Right cardiac atrium (tissue), 5 donors: ENCODE measurements at regions of chr7 and their contacts with region 1.

Region 1: DNA sequence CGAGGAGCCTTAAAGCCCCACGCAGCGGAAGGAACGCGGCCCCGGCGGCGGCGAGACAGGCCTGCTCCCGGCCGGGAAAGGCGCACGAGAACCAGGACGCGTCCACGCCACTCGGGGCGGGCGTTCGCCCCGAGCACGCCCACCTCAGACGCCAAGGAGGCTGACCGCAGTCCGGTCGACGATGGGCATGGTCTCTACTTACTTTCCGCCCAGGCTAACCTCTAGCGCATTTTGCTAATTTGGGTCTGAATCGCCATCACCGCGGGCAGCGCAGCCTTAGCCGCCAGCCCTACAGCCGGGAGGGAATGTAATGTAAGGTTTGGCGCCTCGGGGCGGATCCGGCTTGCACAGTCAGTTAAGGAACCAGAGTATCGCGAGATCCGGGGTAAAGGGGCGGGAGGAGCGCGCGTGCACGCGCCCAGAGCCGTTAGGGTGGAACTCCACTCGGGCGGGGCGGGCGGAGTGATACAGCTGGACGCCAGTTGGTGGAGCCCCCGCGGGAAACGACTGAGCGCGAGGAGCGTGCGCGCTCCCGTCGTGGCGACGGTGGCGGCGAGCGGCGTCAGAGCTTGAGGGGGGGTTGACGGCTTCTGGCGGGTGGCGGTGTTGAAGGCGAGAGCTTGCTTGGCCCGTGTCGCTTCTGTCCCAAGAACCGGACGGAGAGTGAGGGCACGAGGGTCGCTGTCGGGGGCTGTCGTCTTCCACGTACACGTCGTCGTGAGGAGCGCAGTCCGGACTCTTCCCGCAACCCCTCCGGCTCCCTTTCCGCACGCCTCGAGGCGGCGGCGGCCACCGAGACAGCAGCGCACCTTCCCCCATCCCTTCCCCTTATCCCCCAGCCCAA is at the start of gene LUC7L2:
- DNase-seq: peak; percentile 99 to 100 (median 100)
- ATAC-seq: peak; percentile 97 to 98
- H3K4me3 ChIP-seq: peak within 1 kb of the TSS; percentile 80
- H3K27ac ChIP-seq: peak within 1 kb of the TSS; percentile 95
- H3K4me1 ChIP-seq: peaks cover 7% of the 10 kb centered on the region
- H3K27me3 ChIP-seq: no peaks in the 10 kb centered on the region
- total RNA-seq, gene LUC7L2: 49.3 to 58.3 (median 54.7) TPM

Region 2: DNA sequence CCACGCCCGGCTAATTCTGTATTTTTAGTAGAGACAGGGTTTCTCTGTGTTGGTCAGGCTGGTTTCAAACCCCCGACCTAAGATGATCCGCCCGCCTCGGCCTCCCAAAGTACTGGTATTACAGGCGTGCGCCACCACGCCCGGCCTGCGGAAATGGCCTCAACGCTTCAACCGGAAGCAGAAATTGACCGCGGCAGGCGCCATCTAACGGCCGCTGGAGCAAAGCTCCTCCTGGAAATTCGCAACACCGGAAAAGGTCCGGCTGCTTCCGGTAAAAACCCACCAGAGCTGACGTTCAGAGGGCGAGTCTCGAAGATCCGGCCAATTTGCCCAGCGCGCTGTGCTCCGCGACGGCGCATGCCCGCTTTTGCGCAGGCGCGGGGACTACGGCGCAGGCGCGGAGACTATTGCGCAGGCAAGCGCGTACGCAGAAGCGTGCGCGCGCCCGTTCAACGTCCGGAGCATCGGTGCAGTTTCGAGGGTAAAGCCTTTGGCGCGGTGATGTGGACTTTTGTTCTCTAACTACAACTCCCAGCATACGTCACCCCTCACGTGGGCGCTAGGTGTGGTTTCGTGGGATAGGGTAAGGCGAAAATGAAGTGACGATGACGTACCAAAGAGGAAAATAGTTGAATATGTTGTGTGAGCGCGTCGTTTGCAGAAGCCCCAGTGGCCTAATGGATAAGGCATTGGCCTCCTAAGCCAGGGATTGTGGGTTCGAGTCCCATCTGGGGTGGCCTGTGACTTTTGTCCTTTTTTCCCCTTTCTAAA is 19.4 kb before region 1 on chr7:
- intact Hi-C with region 1: loop called in 1 of 4 experiments (anchors 1 kb)
- DNase-seq: peak; percentile 98 to 99 (median 99)
- ATAC-seq: peak; percentile 91 to 96
- H3K4me3 ChIP-seq: peak overlapping the region; percentile 75
- H3K27ac ChIP-seq: peak overlapping the region; percentile 95
- H3K4me1 ChIP-seq: no peaks in the 10 kb centered on the region
- H3K27me3 ChIP-seq: no peaks in the 10 kb centered on the region